CD4-positive, alpha-beta T cell (primary cell): ENCODE measurements at regions of chr12 and their contacts with region 1.

Region 1: DNA sequence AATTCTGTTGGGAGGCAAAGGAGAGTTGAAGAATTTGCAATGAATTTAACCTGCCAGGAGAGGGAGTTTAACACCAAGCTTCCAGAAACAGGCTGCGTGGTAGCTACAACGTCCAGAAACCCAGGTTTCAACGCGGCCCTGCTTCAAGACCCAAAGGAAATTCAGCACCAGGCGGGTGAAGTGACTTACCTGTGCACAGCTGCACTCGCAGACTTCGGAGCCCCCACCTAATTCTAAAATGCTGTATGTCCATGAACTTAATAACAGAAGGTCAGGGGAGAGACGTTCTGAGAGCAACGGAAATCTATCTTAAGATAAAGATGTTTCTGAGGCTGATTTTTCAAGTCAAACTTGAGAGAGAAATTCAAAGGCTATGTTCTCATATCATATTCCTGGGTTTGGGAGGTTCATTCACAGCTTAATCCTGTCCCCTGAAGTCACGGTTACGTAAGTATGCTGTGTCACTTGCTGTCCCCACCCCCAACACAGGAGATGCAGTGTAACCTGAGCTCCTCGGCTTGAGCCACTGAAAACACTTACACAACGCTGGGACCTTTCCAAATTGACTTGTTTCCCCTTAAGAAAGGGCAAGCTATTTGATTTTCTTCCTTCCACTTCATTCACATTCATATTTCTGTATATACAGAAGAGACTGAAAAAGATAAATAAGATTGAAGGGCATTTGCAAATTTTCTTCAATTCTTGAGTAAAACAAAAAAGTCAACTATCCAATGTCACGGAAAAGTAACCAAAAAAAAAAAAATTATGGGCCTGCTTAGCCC is 22.7 kb downstream of the CLIP1 start:
- DNase-seq: peak; percentile 35 to 84 (median 48)
- ATAC-seq: peak; percentile 83
- H3K4me3 ChIP-seq: peak overlapping the region; percentile 8
- H3K4me3 Mint-ChIP-seq: peak overlapping the region; percentile 72
- H3K27ac ChIP-seq: peak overlapping the region; percentile 0 to 35
- H3K27ac Mint-ChIP-seq: peak overlapping the region; percentile 87
- H3K4me1 ChIP-seq: peaks cover 17% of the 10 kb centered on the region
- H3K4me1 Mint-ChIP-seq: peaks cover 41% of the 10 kb centered on the region
- H3K27me3 ChIP-seq: no peaks in the 10 kb centered on the region
- H3K27me3 Mint-ChIP-seq: no peaks in the 10 kb centered on the region
- CTCF ChIP-seq: peak; percentile 79

Region 2: DNA sequence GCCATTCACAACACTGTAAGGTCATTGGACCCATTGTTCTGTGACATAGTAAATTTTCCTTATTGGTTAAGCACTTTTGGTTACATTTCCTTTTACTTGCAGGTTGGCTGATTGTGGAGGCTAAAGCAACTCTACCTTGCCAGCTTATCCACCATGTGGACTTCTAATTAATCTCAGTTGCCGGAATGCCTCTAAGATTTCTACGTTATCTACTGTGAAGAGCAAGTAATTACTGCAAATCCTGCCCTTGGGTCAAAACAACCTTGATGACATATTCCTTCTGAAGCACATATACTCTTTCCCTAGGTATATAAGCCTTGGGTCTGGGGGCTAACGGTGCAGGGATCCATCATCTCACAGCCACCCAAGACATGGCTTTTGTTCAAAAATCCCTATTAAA is 710.8 kb before region 1 on chr12:
- CTCF ChIA-PET with region 1: no interaction called
- POLR2A ChIA-PET with region 1: no interaction called
- intact Hi-C with region 1: no loop called
- DNase-seq: no peak
- ATAC-seq: no peak
- H3K4me3 ChIP-seq: no peak overlapping the region
- H3K4me3 Mint-ChIP-seq: no peak overlapping the region
- H3K27ac ChIP-seq: no peak overlapping the region
- H3K27ac Mint-ChIP-seq: no peak overlapping the region
- H3K4me1 ChIP-seq: peaks cover 14% of the 10 kb centered on the region
- H3K4me1 Mint-ChIP-seq: peaks cover 12% of the 10 kb centered on the region
- H3K27me3 ChIP-seq: no peaks in the 10 kb centered on the region
- H3K27me3 Mint-ChIP-seq: no peaks in the 10 kb centered on the region
- CTCF ChIP-seq: no peak

Region 3: GRCh38 chr12:121964813-121965643 is 434.8 kb before region 1 on chr12:
- CTCF ChIA-PET with region 1: no interaction called
- POLR2A ChIA-PET with region 1: no interaction called
- intact Hi-C with region 1: no loop called
- DNase-seq: no peak
- ATAC-seq: no peak
- H3K4me3 ChIP-seq: no peak overlapping the region
- H3K4me3 Mint-ChIP-seq: no peak overlapping the region
- H3K27ac ChIP-seq: no peak overlapping the region
- H3K27ac Mint-ChIP-seq: no peak overlapping the region
- H3K4me1 ChIP-seq: no peaks in the 10 kb centered on the region
- H3K4me1 Mint-ChIP-seq: no peaks in the 10 kb centered on the region
- H3K27me3 ChIP-seq: no peaks in the 10 kb centered on the region
- H3K27me3 Mint-ChIP-seq: no peaks in the 10 kb centered on the region
- CTCF ChIP-seq: no peak

Region 4: DNA sequence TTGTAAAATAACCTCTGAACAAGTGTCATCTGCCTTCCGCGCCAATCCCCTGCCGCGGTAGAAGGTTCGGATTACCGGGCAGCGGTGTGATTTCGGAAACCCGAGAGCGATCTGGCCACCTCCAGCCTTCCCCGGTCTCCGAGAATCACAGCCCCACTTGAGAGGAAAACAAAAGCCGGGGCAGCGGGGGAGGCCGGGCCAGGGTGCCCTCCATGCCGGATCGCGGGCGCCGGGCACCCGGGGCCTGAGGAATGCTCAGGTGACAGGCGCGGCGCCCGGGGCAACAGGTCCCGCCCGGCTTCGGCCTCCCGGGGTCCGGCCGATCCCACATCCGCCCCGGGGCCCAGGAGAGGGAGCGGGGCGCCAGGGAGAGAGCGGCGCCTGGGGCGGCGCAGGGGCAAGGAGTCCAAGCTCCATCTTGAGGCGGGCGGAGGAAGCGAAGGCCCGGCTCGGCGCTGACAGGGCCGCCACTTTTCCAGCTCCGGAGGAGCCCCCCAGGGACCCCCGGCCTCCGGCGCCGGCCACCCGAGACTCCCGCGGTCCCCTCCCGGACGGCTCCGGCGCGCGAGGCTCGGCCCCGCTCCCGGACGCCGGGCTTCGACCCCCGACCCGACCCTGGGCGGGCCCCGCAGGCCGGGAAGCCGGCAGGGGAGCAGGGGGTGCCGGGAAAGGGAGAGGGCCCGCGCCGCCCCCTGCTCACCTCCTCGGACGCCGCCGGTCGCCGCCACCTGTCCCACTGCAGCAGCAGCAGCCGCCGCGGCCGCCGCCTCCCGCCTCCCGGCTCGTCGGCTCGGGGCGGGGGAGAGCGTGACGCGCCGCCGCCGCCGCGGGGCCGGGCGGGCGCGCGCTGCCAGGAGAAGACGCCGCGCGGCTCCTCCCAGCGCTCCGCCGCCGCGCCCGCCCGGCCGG is 22.3 kb after region 1 on chr12 and contains the start of gene CLIP1:
- CTCF ChIA-PET with region 1: interaction called, 20 read pairs
- POLR2A ChIA-PET with region 1: interaction called, 22 read pairs
- intact Hi-C with region 1: loop called (anchors 1 to 2 kb)
- DNase-seq: peak; percentile 34 to 86 (median 50)
- ATAC-seq: peak; percentile 76
- H3K4me3 ChIP-seq: peak within 1 kb of the TSS; percentile 85
- H3K4me3 Mint-ChIP-seq: peak within 1 kb of the TSS; percentile 96
- H3K27ac ChIP-seq: peak within 1 kb of the TSS; percentile 50 to 62
- H3K27ac Mint-ChIP-seq: peak within 1 kb of the TSS; percentile 86
- H3K4me1 ChIP-seq: peaks cover 32% of the 10 kb centered on the region
- H3K4me1 Mint-ChIP-seq: peaks cover 36% of the 10 kb centered on the region
- H3K27me3 ChIP-seq: no peaks in the 10 kb centered on the region
- H3K27me3 Mint-ChIP-seq: no peaks in the 10 kb centered on the region
- CTCF ChIP-seq: peak; percentile 55
- total RNA-seq, gene CLIP1: 52.0 to 54.9 TPM

Region 5: DNA sequence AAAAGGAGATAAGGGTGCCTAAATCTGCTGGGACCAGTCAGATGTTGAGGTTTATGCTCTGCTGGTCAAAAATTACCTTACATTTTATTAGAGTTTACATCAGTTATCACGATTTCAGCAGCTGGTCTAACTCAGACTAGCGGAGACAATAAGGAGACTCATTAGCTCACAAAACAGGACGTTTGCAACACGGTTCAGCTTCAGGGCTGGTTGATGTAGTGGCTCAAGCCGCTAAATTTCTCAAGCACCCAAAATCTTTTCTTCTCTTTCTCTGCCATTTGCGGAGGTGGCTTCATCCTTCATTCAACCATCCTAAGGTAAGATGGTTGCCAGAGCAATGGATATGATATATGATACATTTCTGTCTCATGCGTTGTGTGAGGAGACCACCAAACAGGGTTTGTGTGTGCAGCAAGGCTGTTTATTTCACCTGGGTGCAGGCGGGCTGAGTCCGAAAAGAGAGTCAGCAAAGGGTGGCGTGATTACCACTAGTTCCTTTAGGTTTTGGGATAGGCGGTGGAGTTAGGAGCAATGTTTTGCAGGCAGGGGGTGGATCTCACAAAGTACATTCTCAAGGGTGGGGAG is 53.0 kb after region 1 on chr12:
- CTCF ChIA-PET with region 1: interaction called, 3 read pairs
- POLR2A ChIA-PET with region 1: interaction called, 3 read pairs
- intact Hi-C with region 1: loop called in 1 of 2 experiments (anchors 5 kb)
- DNase-seq: peak in 4 of 14 experiments; percentile 3 to 35 (median 28)
- ATAC-seq: peak; percentile 22
- H3K4me3 ChIP-seq: no peak overlapping the region
- H3K4me3 Mint-ChIP-seq: peak overlapping the region; percentile 81
- H3K27ac ChIP-seq: peak overlapping the region; percentile 39 to 51
- H3K27ac Mint-ChIP-seq: peak overlapping the region; percentile 91
- H3K4me1 ChIP-seq: peaks cover 27% of the 10 kb centered on the region
- H3K4me1 Mint-ChIP-seq: peaks cover 30% of the 10 kb centered on the region
- H3K27me3 ChIP-seq: no peaks in the 10 kb centered on the region
- H3K27me3 Mint-ChIP-seq: no peaks in the 10 kb centered on the region
- CTCF ChIP-seq: no peak

Region 6: DNA sequence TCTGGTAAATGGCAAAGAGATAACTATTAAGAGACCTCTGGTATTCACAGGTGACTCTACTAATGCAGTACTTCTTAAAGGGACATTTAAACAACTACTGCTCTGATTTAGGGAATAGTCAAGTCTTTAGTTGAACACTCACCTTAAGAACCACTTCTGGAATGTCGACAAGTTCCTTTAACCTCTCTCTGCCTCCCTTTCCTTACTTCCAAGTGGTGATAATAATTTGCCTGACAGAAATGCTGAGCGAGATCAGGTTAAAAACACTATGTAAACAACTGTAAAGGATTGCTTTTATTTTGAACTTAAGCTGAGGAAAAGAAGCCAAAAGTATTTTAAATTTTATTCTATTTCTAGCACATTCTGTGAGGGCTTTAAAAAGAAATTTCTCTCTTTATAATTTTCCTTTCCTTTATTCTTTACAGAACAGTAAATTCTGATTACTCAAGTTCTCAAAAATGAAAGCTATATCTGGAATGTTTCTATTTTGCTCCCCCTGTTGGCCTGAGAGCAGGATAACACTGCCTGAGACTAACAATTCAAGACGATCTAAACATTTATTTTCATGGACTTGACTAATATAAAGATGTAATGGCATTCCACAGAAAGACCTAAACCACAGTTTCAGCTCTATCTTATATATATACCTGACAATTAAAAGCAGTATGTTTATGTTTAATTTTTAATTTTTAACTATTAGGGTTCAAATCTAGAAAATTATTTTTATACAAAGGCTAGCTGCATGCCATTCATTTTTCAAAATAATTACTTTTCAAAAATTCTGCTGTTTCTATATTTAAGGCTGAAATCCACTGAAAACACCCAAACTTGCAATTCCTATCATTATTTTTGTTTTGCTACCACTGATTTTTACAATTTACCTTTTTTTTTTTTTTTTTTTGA is 71.8 kb after region 1 on chr12:
- CTCF ChIA-PET with region 1: interaction called, 84 read pairs
- POLR2A ChIA-PET with region 1: interaction called, 59 read pairs
- intact Hi-C with region 1: loop called (anchors 1 kb)
- DNase-seq: peak in 5 of 14 experiments; percentile 4 to 81 (median 73)
- ATAC-seq: peak; percentile 85
- H3K4me3 ChIP-seq: no peak overlapping the region
- H3K4me3 Mint-ChIP-seq: no peak overlapping the region
- H3K27ac ChIP-seq: no peak overlapping the region
- H3K27ac Mint-ChIP-seq: peak overlapping the region; percentile 2
- H3K4me1 ChIP-seq: no peaks in the 10 kb centered on the region
- H3K4me1 Mint-ChIP-seq: peaks cover 9% of the 10 kb centered on the region
- H3K27me3 ChIP-seq: no peaks in the 10 kb centered on the region
- H3K27me3 Mint-ChIP-seq: no peaks in the 10 kb centered on the region
- CTCF ChIP-seq: peak; percentile 91

Region 7: DNA sequence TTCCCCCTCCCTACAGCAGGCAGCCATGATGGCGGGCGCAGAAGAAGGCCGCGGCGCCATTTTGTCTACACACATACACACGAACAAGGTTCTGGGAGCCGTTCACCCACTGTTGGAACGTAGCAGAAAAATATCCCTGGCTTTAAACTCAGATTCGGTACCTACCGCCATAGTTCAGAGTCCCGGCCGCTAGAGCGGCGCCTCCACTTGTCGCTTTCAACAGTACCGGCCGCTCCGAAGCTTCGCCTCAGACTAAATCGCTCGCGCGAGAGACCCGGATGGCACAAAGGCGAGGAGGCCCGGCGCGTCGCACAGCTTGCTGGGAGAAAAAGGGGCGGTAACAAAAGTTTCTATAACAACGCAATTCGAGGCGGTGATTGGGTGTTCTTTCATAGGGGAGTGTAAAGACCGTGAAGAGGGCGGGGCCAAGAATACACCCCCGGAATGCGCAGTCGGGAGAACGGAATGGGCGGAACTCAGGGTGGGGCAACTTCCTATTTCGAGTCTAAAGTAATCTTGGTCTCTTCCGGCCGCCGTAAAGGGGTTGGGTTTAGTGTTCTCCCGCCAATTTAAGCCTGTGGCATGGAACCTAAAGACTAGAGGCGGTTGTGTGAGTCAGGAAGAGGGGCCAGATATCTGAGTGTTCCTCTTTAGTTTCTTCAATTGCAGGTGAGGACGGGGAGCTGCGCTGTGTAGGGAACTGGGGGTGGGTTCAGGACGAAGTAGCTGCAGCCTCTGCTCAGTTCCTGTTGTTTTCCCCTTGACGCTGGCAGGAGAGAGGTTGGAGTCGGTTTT is 127.1 kb after region 1 on chr12 and contains the starts of genes KNTC1 and RSRC2:
- CTCF ChIA-PET with region 1: interaction called, 3 read pairs
- POLR2A ChIA-PET with region 1: interaction called, 12 read pairs
- intact Hi-C with region 1: no loop called
- DNase-seq: peak; percentile 93 to 100 (median 96)
- ATAC-seq: peak; percentile 90
- H3K4me3 ChIP-seq: peak within 1 kb of the TSS; percentile 97
- H3K4me3 Mint-ChIP-seq: no peak within 1 kb of the TSS
- H3K27ac ChIP-seq: peak within 1 kb of the TSS; percentile 98 to 99
- H3K27ac Mint-ChIP-seq: no peak within 1 kb of the TSS
- H3K4me1 ChIP-seq: peaks cover 21% of the 10 kb centered on the region
- H3K4me1 Mint-ChIP-seq: peaks cover 36% of the 10 kb centered on the region
- H3K27me3 ChIP-seq: no peaks in the 10 kb centered on the region
- H3K27me3 Mint-ChIP-seq: no peaks in the 10 kb centered on the region
- CTCF ChIP-seq: no peak
- total RNA-seq, gene KNTC1: 23.3 to 23.8 TPM
- total RNA-seq, gene RSRC2: 339 to 341 TPM

Region 8: GRCh38 chr12:122752464-122753318 is 352.9 kb after region 1 on chr12 and contains the start of gene DENR:
- CTCF ChIA-PET with region 1: no interaction called
- POLR2A ChIA-PET with region 1: no interaction called
- intact Hi-C with region 1: loop called (anchors 5 to 10 kb)
- DNase-seq: peak; percentile 99 to 100 (median 99)
- ATAC-seq: peak; percentile 92
- H3K4me3 ChIP-seq: peak within 1 kb of the TSS; percentile 89
- H3K4me3 Mint-ChIP-seq: peak within 1 kb of the TSS; percentile 96
- H3K27ac ChIP-seq: peak within 1 kb of the TSS; percentile 86 to 89
- H3K27ac Mint-ChIP-seq: peak within 1 kb of the TSS; percentile 97
- H3K4me1 ChIP-seq: peaks cover 21% of the 10 kb centered on the region
- H3K4me1 Mint-ChIP-seq: peaks cover 57% of the 10 kb centered on the region
- H3K27me3 ChIP-seq: no peaks in the 10 kb centered on the region
- H3K27me3 Mint-ChIP-seq: no peaks in the 10 kb centered on the region
- CTCF ChIP-seq: peak; percentile 76
- total RNA-seq, gene DENR: 29.9 to 31.1 TPM